ENCODE measurements at regions of chr6 and their contacts with region 1.

Region 1: DNA sequence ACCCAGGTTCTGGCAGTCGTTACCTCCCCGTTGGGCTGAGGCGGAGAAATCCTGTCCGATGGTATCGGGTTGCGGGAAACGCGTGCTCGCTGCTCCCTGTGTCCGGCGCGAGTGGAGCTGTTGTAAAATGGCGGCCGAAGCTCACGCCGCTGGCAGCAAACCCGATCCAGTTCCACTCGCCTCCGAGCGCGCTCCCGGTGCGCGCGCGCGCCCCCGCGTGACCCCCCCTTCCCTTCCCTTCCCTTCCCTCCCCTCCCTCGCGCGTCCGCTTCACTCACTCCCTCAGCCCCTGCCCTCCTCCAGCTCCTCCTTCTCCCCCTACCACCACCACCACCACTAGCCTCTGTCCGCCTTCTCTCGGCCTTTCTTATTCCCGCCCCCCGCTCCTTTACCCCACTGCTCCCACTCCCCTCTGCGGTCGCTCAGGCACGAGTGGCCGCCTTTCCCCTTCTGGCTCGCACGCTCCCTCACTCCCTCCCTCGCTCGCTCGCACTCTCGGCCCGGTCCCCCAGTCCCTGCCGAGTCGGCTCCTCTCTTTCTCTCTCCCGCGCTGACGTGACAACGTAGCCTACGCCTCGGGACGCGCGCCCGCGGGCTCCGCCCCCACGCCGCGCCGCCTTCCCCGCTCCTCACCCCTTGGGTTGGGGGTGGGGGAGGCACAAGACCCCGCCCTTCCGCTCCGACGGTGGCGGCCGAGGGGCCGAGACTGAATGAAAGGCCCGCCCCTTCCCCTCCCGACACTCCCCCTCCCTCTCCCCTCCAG is at the start of gene SYNCRIP:
- DNase-seq: peak; percentile 98 to 99
- H3K4me3 ChIP-seq: peak within 1 kb of the TSS; percentile 100
- H3K4me3 Mint-ChIP-seq: peak within 1 kb of the TSS; percentile 99
- H3K27ac Mint-ChIP-seq: peak within 1 kb of the TSS; percentile 74
- H3K4me1 ChIP-seq: peaks cover 26% of the 10 kb centered on the region
- H3K4me1 Mint-ChIP-seq: peaks cover 40% of the 10 kb centered on the region
- H3K27me3 ChIP-seq: no peaks in the 10 kb centered on the region
- H3K27me3 Mint-ChIP-seq: no peaks in the 10 kb centered on the region
- CTCF ChIP-seq: no peak
- total RNA-seq, gene SYNCRIP: 132 and 145 TPM in 2 replicates

Region 2: DNA sequence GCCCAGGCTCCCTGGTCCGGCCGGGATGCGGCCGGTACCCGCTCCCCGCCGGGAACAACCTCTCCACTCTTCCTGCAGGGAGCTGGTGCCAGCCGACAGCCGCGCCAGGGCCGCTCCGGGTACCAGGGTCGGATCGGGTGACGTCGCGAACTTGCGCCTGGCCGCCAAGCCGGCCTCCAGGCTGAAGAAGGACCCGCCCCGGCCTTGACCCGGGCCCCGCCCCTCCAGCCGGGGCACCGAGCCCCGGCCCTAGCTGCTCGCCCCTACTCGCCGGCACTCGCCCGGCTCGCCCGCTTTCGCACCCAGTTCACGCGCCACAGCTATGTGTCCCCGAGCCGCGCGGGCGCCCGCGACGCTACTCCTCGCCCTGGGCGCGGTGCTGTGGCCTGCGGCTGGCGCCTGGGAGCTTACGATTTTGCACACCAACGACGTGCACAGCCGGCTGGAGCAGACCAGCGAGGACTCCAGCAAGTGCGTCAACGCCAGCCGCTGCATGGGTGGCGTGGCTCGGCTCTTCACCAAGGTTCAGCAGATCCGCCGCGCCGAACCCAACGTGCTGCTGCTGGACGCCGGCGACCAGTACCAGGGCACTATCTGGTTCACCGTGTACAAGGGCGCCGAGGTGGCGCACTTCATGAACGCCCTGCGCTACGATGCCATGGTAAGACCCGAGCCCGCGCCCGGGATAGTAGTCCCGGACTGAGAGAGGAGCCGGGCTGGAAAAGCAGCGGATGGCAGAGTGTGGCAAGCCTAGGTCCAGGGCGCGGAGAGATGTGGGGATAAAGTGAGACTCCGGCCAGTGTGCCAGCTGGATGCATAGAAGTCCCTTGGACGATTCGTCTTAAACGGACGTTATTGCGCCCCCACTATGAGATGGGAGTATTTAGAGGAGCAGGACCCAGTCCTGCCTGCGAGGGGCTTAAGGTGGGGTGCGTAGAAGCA is 192.9 kb before region 1 on chr6 and contains the start of gene NT5E:
- CTCF ChIA-PET with region 1: no interaction called
- POLR2A ChIA-PET with region 1: interaction called, 11 read pairs
- intact Hi-C with region 1: no loop called
- DNase-seq: peak; percentile 53 to 71
- H3K4me3 ChIP-seq: peak within 1 kb of the TSS; percentile 61
- H3K4me3 Mint-ChIP-seq: peak within 1 kb of the TSS; percentile 85
- H3K27ac Mint-ChIP-seq: no peak within 1 kb of the TSS
- H3K4me1 ChIP-seq: no peaks in the 10 kb centered on the region
- H3K4me1 Mint-ChIP-seq: peaks cover 17% of the 10 kb centered on the region
- H3K27me3 ChIP-seq: no peaks in the 10 kb centered on the region
- H3K27me3 Mint-ChIP-seq: peaks cover 7% of the 10 kb centered on the region
- CTCF ChIP-seq: peak in 1 of 2 experiments; percentile 1
- total RNA-seq, gene NT5E: 1.0 and 1.5 TPM in 2 replicates

Region 3: DNA sequence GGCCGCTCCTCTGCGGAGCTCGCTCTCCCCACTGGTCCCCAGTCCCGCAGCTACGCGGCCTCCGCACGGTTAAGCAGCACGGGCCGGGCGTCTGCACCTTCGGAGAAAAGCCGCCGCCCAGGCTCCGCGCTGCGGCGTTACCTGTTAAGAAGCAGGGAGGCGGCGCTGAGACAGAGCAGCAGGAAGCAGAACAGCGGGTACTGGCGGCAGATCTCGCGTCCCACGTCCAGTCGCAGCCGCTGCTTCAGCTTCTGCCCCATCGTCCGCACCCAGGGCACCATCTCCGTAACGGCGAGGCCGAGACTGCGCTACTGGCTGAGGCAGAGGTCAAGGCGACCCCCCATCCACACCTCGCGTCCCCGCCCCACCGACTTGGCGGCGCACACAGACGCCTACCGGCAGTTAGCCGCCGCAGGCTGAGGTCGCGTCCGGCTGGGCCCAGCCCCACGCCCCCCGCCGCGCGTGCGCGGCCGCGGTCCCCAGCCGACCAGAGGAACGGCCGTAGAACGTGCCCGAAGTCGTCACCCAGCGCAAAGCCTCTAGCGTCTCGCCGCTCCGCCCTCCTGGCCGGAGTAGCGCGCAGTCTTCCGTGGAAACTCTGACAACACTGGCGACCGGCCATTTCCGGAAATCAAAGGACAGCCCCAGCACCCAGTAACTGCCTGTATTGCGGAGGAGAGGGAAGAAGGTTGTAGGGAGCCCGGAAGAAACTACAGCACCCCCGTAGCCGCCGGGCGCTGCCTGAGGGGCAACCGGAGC is 49.3 kb before region 1 on chr6 and contains the start of gene SNX14:
- CTCF ChIA-PET with region 1: interaction called, 3 read pairs
- POLR2A ChIA-PET with region 1: interaction called, 16 read pairs
- intact Hi-C with region 1: loop called (anchors 1 kb)
- DNase-seq: peak; percentile 93 to 94
- H3K4me3 ChIP-seq: peak within 1 kb of the TSS; percentile 88
- H3K4me3 Mint-ChIP-seq: peak within 1 kb of the TSS; percentile 88
- H3K27ac Mint-ChIP-seq: peak within 1 kb of the TSS; percentile 94
- H3K4me1 ChIP-seq: peaks cover 5% of the 10 kb centered on the region; the same call in 1 of the 2 replicates
- H3K4me1 Mint-ChIP-seq: peaks cover 12% of the 10 kb centered on the region
- H3K27me3 ChIP-seq: no peaks in the 10 kb centered on the region
- H3K27me3 Mint-ChIP-seq: no peaks in the 10 kb centered on the region
- CTCF ChIP-seq: no peak
- total RNA-seq, gene SNX14: 85.0 and 87.5 TPM in 2 replicates

Region 4: DNA sequence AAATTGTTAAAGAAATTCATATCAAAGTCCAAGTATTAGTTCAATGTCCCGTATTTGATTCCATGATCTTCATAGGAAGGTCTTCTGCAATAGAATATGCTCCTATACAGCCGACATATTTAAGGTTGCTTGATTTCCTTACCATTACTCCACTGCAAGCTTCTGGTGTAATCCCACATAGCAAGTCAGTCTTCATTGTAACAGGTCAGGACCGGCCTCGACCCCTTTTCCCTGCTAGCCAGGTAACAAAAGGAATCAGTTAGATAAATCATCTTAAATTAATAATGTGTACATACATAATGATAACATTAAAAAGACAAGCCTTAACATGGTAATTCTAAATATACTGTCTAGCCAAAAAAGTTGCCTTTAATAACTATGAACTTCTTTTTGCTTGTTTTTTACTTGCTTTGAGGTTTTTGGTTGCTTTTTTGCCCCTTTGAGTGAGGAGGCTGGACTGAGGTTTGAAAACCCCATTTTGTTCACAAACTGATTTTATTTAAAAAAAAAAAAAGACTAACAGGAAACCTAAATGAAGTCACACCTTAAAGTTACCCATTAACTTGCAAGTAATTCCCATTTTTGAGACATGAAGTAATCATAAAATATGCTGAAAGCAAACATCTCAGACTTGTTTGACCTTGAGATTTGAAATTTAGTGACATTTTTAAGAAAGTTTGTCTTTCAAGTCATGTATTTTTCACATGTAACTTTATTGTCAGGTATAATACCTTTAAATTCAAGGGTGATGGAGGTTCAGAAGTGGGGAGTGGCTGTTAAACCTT is 30.1 kb before region 1 on chr6:
- CTCF ChIA-PET with region 1: no interaction called
- POLR2A ChIA-PET with region 1: interaction called, 3 read pairs
- intact Hi-C with region 1: loop called (anchors 2 kb)
- DNase-seq: no peak
- H3K4me3 ChIP-seq: no peak overlapping the region
- H3K4me3 Mint-ChIP-seq: no peak overlapping the region
- H3K27ac Mint-ChIP-seq: no peak overlapping the region
- H3K4me1 ChIP-seq: peaks cover 19% of the 10 kb centered on the region
- H3K4me1 Mint-ChIP-seq: peaks cover 7% of the 10 kb centered on the region
- H3K27me3 ChIP-seq: no peaks in the 10 kb centered on the region
- H3K27me3 Mint-ChIP-seq: no peaks in the 10 kb centered on the region
- CTCF ChIP-seq: no peak

Region 5: GRCh38 chr6:85670573-85670972 is 27.6 kb after region 1 on chr6:
- CTCF ChIA-PET with region 1: no interaction called
- POLR2A ChIA-PET with region 1: interaction called, 12 read pairs
- intact Hi-C with region 1: no loop called
- DNase-seq: no peak
- H3K4me3 ChIP-seq: no peak overlapping the region
- H3K4me3 Mint-ChIP-seq: no peak overlapping the region
- H3K27ac Mint-ChIP-seq: no peak overlapping the region
- H3K4me1 ChIP-seq: no peaks in the 10 kb centered on the region
- H3K4me1 Mint-ChIP-seq: peaks cover 7% of the 10 kb centered on the region
- H3K27me3 ChIP-seq: no peaks in the 10 kb centered on the region
- H3K27me3 Mint-ChIP-seq: no peaks in the 10 kb centered on the region
- CTCF ChIP-seq: no peak

Region 6: DNA sequence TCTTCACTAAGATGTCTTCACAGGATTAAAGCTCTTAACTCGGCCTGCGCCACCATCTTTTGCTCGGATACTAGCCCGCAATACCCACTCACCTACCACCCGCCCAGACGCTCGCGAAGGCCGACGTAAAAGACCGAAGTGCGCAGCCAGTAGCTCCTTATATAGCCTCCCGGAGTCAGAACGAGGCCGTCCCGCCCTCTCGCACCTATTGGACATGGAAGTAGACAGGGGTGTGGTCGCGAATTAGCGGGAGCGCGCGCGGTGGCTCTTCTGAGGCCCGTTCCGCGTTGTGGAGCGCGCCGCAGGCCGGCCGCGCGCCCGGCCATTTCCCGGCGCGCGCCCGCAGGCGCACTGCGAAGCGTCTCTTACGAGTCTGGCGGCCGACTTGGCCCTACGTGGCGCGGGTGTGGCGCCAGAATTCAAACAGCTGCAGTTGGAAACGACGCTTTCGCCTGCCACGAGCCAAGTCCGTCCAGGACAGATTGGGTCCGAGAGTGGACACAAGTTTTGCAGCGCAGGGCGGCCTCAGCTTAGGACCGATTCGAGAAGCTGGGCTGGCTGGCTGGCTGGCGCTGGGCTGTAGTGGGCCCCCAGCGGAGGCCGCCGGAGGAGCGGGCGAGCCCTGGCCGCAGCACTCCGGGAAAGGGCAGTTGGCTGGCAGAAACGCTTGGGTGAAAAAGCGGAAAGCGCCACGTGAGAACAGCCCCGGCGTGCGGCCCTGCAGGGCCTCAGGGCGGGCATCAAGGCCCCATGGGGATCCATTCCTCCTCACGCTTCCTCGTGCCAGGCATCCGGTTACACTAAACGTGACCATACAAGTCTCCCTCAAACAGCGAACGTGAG is 35.9 kb after region 1 on chr6:
- CTCF ChIA-PET with region 1: interaction called, 4 read pairs
- POLR2A ChIA-PET with region 1: interaction called, 153 read pairs
- intact Hi-C with region 1: loop called (anchors 1 kb)
- DNase-seq: peak; percentile 97
- H3K4me3 ChIP-seq: peak overlapping the region; percentile 89
- H3K4me3 Mint-ChIP-seq: peak overlapping the region; percentile 99
- H3K27ac Mint-ChIP-seq: peak overlapping the region; percentile 98
- H3K4me1 ChIP-seq: no peaks in the 10 kb centered on the region
- H3K4me1 Mint-ChIP-seq: peaks cover 26% of the 10 kb centered on the region
- H3K27me3 ChIP-seq: no peaks in the 10 kb centered on the region
- H3K27me3 Mint-ChIP-seq: peaks cover 2% of the 10 kb centered on the region
- CTCF ChIP-seq: no peak

Region 7: GRCh38 chr6:86045038-86045437 is 402.1 kb after region 1 on chr6:
- CTCF ChIA-PET with region 1: no interaction called
- POLR2A ChIA-PET with region 1: no interaction called
- intact Hi-C with region 1: no loop called
- DNase-seq: no peak
- H3K4me3 ChIP-seq: no peak overlapping the region
- H3K4me3 Mint-ChIP-seq: no peak overlapping the region
- H3K27ac Mint-ChIP-seq: no peak overlapping the region
- H3K4me1 ChIP-seq: no peaks in the 10 kb centered on the region
- H3K4me1 Mint-ChIP-seq: no peaks in the 10 kb centered on the region
- H3K27me3 ChIP-seq: no peaks in the 10 kb centered on the region
- H3K27me3 Mint-ChIP-seq: no peaks in the 10 kb centered on the region
- CTCF ChIP-seq: no peak

Measured in Caco-2 (cell line).